ENCODE measurements at regions of chr10 and their contacts with region 1.

Region 1: DNA sequence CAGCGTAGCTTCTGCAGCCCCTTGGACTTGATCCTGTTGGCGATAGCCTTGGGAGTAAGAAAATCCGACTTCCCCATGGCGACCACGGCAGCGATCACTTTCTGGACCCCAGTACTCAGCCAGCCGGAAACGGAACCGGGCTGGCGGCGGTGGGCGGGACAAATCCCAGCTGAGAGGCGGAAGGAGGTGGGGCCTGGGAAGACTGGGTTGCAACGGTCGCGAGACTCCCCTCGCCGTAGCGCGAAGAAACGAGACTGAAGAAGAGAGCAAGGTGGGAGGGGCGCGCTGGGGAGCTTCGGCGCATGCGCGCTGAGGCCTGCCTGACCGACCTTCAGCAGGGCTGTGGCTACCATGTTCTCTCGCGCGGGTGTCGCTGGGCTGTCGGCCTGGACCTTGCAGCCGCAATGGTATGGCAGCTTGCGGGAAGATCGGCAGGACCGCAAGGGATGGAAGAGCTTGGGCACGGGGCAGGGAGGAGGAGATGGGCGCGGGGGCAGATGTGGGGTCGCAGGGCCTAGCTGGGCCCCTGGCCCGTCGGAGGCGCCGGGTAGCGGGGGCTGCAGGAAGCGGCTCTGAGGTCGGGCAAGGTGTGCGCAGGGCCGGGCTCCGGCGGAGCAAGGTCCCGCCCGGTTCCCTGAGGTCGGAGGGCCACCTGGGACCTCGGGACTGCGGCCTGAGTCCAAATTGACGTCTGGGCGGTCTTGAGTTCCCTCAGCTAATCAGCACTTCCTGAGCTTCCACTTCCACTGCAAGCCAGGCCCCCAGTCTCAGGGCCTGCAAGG is at the starts of genes ATP5F1C and KIN:
- DNase-seq: peak; percentile 98
- H3K4me3 Mint-ChIP-seq: no peak within 1 kb of the TSS
- H3K27ac Mint-ChIP-seq: no peak within 1 kb of the TSS
- H3K4me1 Mint-ChIP-seq: peaks cover 63% of the 10 kb centered on the region
- H3K27me3 Mint-ChIP-seq: no peaks in the 10 kb centered on the region
- total RNA-seq, gene ATP5F1C: 287 to 290 TPM
- total RNA-seq, gene KIN: 6.4 to 7.7 TPM

Region 2: GRCh38 chr10:7478727-7479457 is 309.2 kb before region 1 on chr10:
- CTCF ChIA-PET with region 1: no interaction called
- intact Hi-C with region 1: loop called (anchors 2 kb)
- DNase-seq: no peak
- H3K4me3 Mint-ChIP-seq: no peak overlapping the region
- H3K27ac Mint-ChIP-seq: no peak overlapping the region
- H3K4me1 Mint-ChIP-seq: peaks cover 58% of the 10 kb centered on the region
- H3K27me3 Mint-ChIP-seq: no peaks in the 10 kb centered on the region

Region 3: DNA sequence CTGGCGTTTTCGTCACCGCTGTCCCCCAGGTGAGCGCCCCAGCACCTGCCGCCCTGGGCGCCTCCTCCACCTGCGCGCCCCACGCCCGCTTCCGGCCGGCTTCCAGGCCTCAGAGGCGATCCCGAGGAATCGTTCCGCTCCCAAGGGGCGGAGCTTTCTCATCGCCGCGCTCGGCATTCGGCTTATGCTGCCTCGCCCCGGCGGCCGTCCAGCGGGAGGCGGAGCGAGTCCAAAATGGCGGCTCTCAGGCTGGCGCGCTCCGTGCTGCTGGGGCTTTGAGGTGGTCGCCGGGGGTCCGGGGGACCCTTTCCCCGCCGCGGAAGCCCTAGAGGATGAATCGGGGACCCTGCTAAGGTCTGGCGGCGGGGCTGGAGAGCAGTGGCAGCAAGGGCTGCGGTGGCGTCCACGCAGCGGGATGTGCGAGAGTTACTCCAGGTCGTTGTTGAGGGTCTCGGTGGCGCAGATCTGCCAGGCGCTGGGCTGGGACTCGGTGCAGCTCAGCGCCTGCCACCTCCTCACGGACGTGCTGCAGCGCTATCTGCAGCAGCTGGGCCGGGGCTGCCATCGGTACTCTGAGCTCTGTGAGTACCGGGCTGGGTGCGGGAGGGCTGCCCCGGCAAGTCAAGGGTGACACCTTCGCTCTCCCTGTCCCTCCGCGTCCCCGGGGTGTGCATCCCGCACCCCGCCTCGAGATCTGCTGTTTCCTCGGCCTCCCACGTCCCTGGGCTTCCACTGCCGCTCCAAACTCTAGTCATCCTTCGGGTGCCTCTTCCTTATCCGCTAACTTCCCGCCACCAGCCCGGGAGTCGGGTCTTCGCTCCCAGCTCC is 30.5 kb after region 1 on chr10 and contains the start of gene TAF3:
- CTCF ChIA-PET with region 1: interaction called, 3 read pairs
- intact Hi-C with region 1: loop called (anchors 1 kb)
- DNase-seq: peak; percentile 95
- H3K4me3 Mint-ChIP-seq: peak within 1 kb of the TSS; percentile 94
- H3K27ac Mint-ChIP-seq: peak within 1 kb of the TSS; percentile 62
- H3K4me1 Mint-ChIP-seq: peaks cover 28% of the 10 kb centered on the region
- H3K27me3 Mint-ChIP-seq: no peaks in the 10 kb centered on the region
- total RNA-seq, gene TAF3: 12.6 to 12.8 TPM

Measured in activated naive CD4-positive, alpha-beta T cell treated with anti-CD3 and anti-CD28 coated beads for 36 hours (primary cell).